ENCODE measurements at regions of chr9 and their contacts with region 1.

Region 1: DNA sequence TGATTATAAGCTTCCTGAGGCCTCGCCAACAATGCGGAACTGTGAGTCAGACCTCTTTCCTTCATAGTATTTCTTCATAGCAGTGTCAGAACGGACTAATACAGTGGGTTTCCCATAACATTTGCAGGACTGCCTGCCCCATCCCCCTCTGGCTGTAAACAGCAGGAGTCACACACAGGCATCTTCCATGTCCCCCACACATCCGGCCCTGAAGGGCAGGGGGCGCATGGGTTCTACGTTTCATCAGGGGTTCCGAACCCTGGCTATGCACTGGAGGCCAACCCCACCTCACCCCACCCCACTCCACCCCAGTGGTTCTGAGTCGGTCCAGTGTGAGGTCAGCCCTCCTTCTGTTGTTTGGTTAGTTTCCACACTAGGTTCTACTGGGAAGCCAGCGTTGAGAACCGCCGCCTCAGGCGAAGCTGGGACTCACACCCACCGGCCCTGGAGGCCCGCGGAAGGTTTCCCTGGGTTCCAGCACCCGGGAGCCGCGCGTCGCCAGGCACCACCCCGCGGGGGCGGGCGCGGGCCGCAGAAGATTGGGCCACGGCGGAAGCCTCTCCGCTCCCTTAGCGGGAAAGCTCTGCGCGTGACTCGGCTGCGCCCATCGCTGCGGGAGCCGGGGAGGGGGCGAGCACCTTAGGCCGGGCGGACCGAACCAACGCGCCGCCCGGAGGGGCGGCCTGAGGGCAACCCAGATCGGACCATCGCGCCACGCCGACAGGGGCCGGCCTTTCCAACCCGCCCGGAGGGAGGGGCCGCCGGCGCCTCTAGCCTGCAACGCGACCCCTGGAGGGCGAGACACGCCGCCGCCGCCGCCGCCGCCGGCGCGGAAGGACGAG is at the start of gene RUSC2:
- DNase-seq: peak; percentile 63 to 88 (median 80)
- H3K4me3 ChIP-seq: peak within 1 kb of the TSS; percentile 71 to 96 (median 89)
- H3K27ac ChIP-seq: peak within 1 kb of the TSS; percentile 65 to 99 (median 95)
- H3K27me3 ChIP-seq: no peaks in the 10 kb centered on the region
- CTCF ChIP-seq: peak; percentile 12 to 78 (median 57)
- total RNA-seq, gene RUSC2: 95.5 to 189 (median 149) TPM

Region 2: DNA sequence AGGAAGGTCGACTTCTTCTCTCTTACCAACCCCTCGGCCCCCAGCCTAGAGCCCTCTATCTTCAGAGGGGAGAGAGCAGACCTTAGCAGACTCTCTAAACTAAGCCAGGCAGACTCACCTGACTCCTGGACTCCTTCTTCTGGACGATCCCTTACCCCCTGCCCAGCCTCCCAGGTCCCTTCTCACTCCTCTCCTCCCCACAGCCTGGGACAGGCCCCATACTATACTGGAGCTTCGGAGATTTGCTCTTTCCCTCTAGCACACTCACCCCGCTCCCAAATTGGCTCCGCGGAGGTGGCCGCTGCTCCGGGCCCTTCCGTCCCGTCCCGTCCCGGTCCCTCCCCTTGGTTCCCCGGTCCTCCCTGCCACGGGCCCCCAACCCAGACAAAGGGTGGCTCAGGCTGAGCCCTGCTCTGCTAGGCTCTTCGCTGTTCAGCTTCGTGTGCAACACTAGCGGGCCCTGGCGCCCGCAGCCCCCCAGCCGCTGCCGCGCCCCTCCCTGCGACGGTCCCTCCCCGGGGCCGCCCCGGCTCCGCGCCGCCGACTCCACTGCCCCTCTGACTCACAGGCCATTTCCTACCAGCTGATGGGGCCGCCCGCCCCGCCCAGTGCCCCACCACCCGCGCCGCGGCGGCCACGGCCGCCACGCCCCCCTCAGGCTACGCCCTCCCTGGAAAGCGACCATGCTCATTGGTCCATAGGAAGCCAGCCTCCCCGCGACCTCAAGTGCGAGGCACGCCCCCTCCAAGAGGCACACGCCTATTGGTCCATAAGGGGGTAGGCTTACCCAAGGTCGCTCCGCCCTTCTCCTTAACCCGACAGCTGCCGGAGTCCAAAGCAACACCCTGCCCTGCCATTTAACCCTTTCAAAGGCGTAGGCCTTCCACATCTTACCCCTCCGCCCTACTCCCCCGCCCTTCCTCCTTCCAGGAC is 378.3 kb before region 1 on chr9:
- intact Hi-C with region 1: loop called in 1 of 2 experiments (anchors 5 kb)
- DNase-seq: peak; percentile 97 to 99 (median 99)
- H3K4me3 ChIP-seq: peak overlapping the region; percentile 60 to 99 (median 94)
- H3K27ac ChIP-seq: peak overlapping the region; percentile 72 to 98 (median 92)
- H3K27me3 ChIP-seq: no peaks in the 10 kb centered on the region
- CTCF ChIP-seq: peak in 22 of 56 donors; percentile 11 to 51 (median 26)

Region 3: GRCh38 chr9:35277628-35278359 is 211.7 kb before region 1 on chr9:
- intact Hi-C with region 1: loop called in 1 of 2 experiments (anchors 10 kb)
- DNase-seq: no peak
- H3K4me3 ChIP-seq: peak overlapping the region in 32 of 59 donors; percentile 1 to 58 (median 27)
- H3K27ac ChIP-seq: peak overlapping the region in 50 of 59 donors; percentile 1 to 79 (median 47)
- H3K27me3 ChIP-seq: no peaks in the 10 kb centered on the region
- CTCF ChIP-seq: peak in 2 of 56 donors; percentile 10 to 11

Region 4: GRCh38 chr9:35374436-35374835 is 115.1 kb before region 1 on chr9:
- intact Hi-C with region 1: no loop called
- DNase-seq: no peak
- H3K4me3 ChIP-seq: no peak overlapping the region
- H3K27ac ChIP-seq: no peak overlapping the region
- H3K27me3 ChIP-seq: no peaks in the 10 kb centered on the region
- CTCF ChIP-seq: no peak

Region 5: DNA sequence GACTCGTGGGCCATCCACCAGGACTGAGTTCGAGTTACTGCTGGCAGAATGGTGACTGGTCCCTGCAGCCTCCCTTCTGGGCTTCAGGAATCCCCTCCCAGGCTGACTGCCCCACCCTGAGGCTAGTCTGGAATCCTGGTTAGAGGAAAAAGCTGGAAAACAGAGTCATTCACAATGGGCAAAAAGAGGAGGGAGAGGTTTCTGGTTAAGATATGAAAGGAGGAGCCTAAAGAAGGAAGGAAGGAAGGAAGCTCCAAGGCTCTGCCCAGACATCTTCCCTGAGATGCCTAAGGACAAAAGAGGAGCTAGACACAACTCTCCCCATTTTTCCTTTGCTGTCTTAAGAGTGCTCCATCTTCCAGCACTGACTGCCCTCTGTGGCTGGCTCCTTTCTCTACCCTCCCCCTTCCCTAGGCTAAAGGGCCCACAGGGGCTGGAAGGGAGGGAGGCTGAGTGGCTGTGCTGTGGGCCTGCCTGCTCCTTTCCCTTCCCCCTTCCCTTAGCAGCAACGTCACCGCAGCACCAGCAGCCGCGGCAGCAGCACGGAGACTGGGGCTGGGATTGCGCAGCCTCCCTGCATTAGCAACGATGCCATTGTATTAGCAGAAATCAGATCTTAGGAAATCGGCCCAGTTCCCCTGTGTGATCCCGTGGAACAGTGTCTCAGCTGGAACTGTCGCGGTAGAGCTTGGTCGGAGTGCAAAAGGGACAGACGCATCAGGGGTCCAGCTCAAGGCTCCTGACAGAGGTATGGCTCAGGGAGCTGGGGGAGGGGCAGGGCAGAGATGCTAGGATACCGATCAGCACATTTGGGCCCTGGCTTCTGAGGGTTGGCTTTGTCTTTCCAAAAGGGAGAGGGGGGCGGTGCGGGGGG is 49.1 kb after region 1 on chr9:
- intact Hi-C with region 1: loop called in 1 of 2 experiments (anchors 2 kb)
- DNase-seq: peak; percentile 67 to 88 (median 84)
- H3K4me3 ChIP-seq: peak overlapping the region; percentile 33 to 83 (median 67)
- H3K27ac ChIP-seq: peak overlapping the region; percentile 86 to 98 (median 95)
- H3K27me3 ChIP-seq: no peaks in the 10 kb centered on the region
- CTCF ChIP-seq: peak in 16 of 56 donors; percentile 8 to 32 (median 17)

Region 6: DNA sequence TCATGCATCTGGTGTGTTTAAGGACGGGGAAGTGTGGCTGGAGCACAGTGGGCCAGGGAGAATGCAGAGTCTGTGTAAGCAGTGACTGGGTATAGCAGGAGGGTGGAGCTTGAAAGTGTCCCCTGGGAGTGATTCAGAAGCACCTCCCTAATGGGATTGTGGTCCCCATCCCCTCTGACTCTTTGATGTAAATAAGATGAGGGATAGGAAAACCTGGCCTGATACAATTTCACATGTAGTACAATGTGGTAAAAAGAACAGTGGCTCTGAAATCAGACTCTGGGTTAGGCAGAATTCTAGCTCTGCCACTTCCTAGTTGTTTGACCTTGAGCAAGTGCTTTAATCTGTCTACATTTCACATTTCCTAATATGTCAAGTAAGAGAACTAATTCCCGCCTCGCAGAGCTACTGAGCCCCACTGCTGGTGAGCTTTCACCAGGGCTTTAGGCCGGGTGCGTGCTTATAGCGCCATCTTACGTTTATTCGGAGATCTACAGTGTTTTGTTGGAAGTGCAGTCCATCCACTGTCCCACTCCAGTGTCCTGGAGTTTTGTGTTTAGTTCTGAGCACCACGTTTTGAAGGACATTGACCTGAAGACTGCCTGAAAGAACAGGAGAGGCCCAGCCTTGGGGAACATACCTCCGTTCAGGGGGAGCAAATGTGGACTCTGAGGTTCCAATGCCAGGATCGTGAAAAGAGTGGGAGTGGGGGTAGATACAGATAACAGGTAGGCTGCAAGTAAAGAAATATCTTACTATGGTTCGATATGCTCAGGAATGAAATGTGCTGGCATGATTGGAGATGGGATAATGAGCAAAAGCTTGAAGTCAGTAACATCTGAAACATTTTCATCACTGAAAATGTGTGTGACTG is 64.4 kb after region 1 on chr9:
- intact Hi-C with region 1: loop called (anchors 1 kb)
- DNase-seq: peak in 8 of 10 donors; percentile 54 to 78 (median 67)
- H3K4me3 ChIP-seq: peak overlapping the region in 13 of 59 donors; percentile 1 to 38 (median 19)
- H3K27ac ChIP-seq: peak overlapping the region in 53 of 59 donors; percentile 7 to 86 (median 68)
- H3K27me3 ChIP-seq: no peaks in the 10 kb centered on the region
- CTCF ChIP-seq: peak; percentile 75 to 97 (median 92)

Region 7: GRCh38 chr9:35603987-35604577 is 114.5 kb after region 1 on chr9:
- intact Hi-C with region 1: loop called (anchors 2 to 5 kb)
- DNase-seq: peak; percentile 98 to 99 (median 99)
- H3K4me3 ChIP-seq: peak overlapping the region; percentile 49 to 97 (median 79)
- H3K27ac ChIP-seq: peak overlapping the region; percentile 63 to 95 (median 88)
- H3K27me3 ChIP-seq: no peaks in the 10 kb centered on the region
- CTCF ChIP-seq: peak; percentile 93 to 100 (median 98)